Posterior vena cava (tissue), 2 donors: ENCODE measurements at regions of chr1 and their contacts with region 1.

Region 1: GRCh38 chr1:26321315-26322041 is 3.7 kb downstream of the CD52 start:
- DNase-seq: peak; percentile 98

Region 2: GRCh38 chr1:26097696-26098095 is 223.8 kb before region 1 on chr1:
- intact Hi-C with region 1: loop called in 1 of 2 experiments (anchors 10 kb)
- DNase-seq: no peak

Region 3: GRCh38 chr1:26169669-26170471 is 151.6 kb before region 1 on chr1 and contains the start of gene ZNF593:
- intact Hi-C with region 1: loop called in 1 of 2 experiments (anchors 5 kb)
- DNase-seq: peak; percentile 98
- total RNA-seq, gene ZNF593: 14.9 to 17.6 TPM

Region 4: DNA sequence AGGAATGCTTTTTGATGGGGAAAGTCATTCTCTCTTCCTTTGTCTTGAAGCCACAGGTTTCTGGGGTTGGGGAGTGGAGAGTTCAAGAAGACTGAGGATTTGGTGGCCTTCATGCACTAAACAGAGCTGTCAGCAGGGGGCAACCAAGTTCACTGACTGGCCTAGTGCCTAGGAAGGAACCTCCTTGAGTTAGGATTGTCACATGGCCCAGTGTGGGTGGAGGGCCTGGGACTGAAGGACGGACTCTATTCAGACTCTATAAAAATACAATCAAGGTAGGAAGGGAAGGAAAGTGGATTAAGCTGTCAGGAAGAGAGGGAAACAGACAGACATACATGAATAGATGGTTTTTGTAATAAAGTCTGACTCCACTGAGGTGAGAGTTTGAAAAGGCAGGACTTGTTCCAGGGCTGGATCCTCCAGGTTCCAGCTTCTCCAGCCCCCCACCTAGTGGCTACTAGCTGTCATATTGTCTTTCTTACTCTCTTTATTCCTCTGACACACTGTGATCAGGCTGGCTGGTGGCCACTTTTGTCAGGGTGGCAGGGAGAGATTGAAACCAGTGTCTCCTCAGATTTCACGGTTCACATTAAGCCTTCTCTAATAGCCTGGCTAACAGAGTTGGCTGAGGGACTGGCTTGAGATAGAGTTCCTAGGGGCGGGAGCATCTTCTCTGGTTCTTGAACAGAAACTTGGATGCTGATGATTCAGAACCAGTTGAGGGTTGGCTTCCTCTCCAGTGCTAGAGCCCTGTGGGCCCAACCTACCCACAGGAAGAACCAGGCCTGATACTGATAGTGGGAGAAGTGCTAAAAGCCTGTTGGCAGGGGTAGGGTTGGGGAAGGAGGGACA is 45.7 kb before region 1 on chr1:
- intact Hi-C with region 1: loop called (anchors 2 to 5 kb)
- DNase-seq: peak; percentile 94

Region 5: DNA sequence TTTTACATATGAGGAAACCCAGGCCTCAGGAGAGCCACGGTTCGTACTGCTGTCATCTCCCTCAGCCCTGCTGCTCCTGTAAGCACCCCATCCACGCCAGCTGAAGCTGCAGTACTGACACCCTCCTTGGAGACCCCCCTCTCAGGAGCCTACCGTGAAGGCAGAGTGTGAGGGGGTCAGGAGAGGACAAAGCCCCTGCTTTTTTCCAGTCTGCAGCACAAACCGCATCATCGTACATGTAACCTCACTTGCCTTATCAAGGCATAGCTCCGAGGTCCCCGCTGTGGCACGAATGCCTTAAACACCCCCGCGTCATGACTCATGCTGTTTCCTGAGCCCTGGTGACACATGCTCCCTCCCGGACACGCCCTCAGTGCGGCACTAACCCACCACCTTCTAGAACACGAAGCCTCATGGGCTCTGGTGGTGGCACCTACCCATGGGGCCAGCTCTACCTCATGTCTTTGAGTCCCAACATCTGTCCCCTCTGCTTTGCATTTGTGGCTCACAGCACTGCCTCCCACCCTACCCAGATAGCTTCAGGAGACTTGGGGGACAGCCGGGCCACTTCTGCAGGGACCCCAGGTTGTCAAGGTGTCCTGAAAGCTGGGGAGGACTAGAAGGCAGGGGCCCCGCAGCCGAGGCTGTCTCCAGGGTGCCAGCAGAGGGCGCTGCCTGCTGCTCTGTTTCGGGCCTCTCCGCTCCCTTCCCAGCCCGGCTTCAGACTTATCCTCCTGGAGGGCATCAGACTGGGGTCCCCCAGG is 36.7 kb before region 1 on chr1:
- intact Hi-C with region 1: loop called in 1 of 2 experiments (anchors 5 kb)
- DNase-seq: peak; percentile 95